CD4-positive, alpha-beta T cell (primary cell): ENCODE measurements at regions of chr3 and their contacts with region 1.

Region 1: GRCh38 chr3:44510000-44510368 is 32.5 kb upstream of the ZNF445 start:
- DNase-seq: peak in 4 of 14 experiments; percentile 14 to 44 (median 40)
- ATAC-seq: peak; percentile 25
- H3K4me3 ChIP-seq: peak overlapping the region; percentile 91
- H3K4me3 Mint-ChIP-seq: peak overlapping the region; percentile 100
- H3K27ac ChIP-seq: peak overlapping the region; percentile 74 to 79
- H3K27ac Mint-ChIP-seq: peak overlapping the region; percentile 88
- H3K4me1 ChIP-seq: peaks cover 25% of the 10 kb centered on the region
- H3K4me1 Mint-ChIP-seq: peaks cover 51% of the 10 kb centered on the region
- H3K27me3 ChIP-seq: no peaks in the 10 kb centered on the region
- H3K27me3 Mint-ChIP-seq: no peaks in the 10 kb centered on the region
- CTCF ChIP-seq: no peak

Region 2: DNA sequence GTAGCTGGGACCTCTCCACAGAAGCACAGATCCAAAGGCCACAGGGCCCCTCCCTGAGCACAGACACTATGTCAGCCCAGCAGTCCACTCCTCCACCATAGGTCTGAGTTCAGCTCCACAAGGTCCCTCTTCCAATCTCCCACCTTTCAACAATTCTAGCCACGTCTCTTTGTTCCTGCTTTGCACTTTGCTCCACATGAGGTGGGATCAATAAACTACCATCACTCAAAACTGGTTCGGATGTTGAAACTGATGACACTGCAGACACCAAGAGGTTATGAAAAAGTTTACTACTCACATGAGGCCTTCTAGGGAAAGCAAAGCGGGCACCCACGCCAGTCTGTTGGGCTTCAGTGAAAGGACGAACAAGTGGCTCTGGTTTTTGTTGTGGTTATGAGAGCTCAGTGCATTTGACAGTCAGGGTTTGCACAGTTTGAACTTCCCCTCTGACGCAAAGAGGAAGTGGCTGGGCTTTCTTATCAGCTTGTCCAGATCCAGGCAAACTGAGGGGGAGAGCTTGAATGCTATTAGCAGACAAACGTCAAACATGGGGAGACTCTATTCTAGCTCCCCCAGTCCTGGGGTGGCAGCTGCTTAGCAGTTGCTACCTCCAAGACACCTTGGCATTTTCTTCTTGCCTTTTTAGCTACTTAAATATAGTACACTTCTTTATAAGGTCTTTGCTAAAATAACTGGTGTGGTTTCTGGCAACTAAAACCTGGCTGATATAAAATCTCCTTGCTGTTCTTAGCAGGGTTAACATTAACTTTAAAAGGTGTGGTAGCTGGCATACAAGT is 70.3 kb before region 1 on chr3:
- CTCF ChIA-PET with region 1: no interaction called
- POLR2A ChIA-PET with region 1: interaction called, 11 read pairs
- intact Hi-C with region 1: loop called in 1 of 2 experiments (anchors 10 kb)
- DNase-seq: peak; percentile 10 to 88 (median 44)
- ATAC-seq: peak; percentile 81
- H3K4me3 ChIP-seq: no peak overlapping the region
- H3K4me3 Mint-ChIP-seq: peak overlapping the region; percentile 75
- H3K27ac ChIP-seq: peak overlapping the region; percentile 54 to 80
- H3K27ac Mint-ChIP-seq: peak overlapping the region; percentile 84
- H3K4me1 ChIP-seq: peaks cover 30% of the 10 kb centered on the region
- H3K4me1 Mint-ChIP-seq: peaks cover 39% of the 10 kb centered on the region
- H3K27me3 ChIP-seq: no peaks in the 10 kb centered on the region
- H3K27me3 Mint-ChIP-seq: no peaks in the 10 kb centered on the region
- CTCF ChIP-seq: no peak

Region 3: GRCh38 chr3:44554626-44555592 is 44.9 kb after region 1 on chr3 and contains the start of gene ZKSCAN7:
- CTCF ChIA-PET with region 1: no interaction called
- POLR2A ChIA-PET with region 1: interaction called, 19 read pairs
- intact Hi-C with region 1: no loop called
- DNase-seq: peak in 13 of 14 experiments; percentile 7 to 59 (median 33)
- ATAC-seq: peak; percentile 54
- H3K4me3 ChIP-seq: peak within 1 kb of the TSS; percentile 65
- H3K4me3 Mint-ChIP-seq: peak within 1 kb of the TSS; percentile 91
- H3K27ac ChIP-seq: no peak within 1 kb of the TSS
- H3K27ac Mint-ChIP-seq: peak within 1 kb of the TSS; percentile 63
- H3K4me1 ChIP-seq: peaks cover 16% of the 10 kb centered on the region
- H3K4me1 Mint-ChIP-seq: peaks cover 27% of the 10 kb centered on the region
- H3K27me3 ChIP-seq: no peaks in the 10 kb centered on the region
- H3K27me3 Mint-ChIP-seq: peaks cover 8% of the 10 kb centered on the region
- CTCF ChIP-seq: no peak
- total RNA-seq, gene ZKSCAN7: 0.20 to 0.49 TPM

Region 4: GRCh38 chr3:44685128-44685800 is 175.3 kb after region 1 on chr3:
- CTCF ChIA-PET with region 1: no interaction called
- POLR2A ChIA-PET with region 1: no interaction called
- intact Hi-C with region 1: no loop called
- DNase-seq: peak in 12 of 14 experiments; percentile 13 to 74 (median 43)
- ATAC-seq: peak; percentile 48
- H3K4me3 ChIP-seq: peak overlapping the region; percentile 54
- H3K4me3 Mint-ChIP-seq: peak overlapping the region; percentile 83
- H3K27ac ChIP-seq: no peak overlapping the region
- H3K27ac Mint-ChIP-seq: no peak overlapping the region
- H3K4me1 ChIP-seq: peaks cover 13% of the 10 kb centered on the region
- H3K4me1 Mint-ChIP-seq: peaks cover 13% of the 10 kb centered on the region
- H3K27me3 ChIP-seq: peaks cover 0 to 13% of the 10 kb centered on the region in 2 experiments
- H3K27me3 Mint-ChIP-seq: peaks cover 36% of the 10 kb centered on the region
- CTCF ChIP-seq: no peak

Region 5: GRCh38 chr3:44761424-44762169 is 251.6 kb after region 1 on chr3 and contains the starts of genes KIAA1143 and KIF15:
- CTCF ChIA-PET with region 1: no interaction called
- POLR2A ChIA-PET with region 1: interaction called, 18 read pairs
- intact Hi-C with region 1: loop called (anchors 2 kb)
- DNase-seq: peak; percentile 92 to 99 (median 96)
- ATAC-seq: peak; percentile 98
- H3K4me3 ChIP-seq: peak within 1 kb of the TSS; percentile 73
- H3K4me3 Mint-ChIP-seq: peak within 1 kb of the TSS; percentile 99
- H3K27ac ChIP-seq: peak within 1 kb of the TSS; percentile 72 to 76
- H3K27ac Mint-ChIP-seq: peak within 1 kb of the TSS; percentile 94
- H3K4me1 ChIP-seq: peaks cover 16% of the 10 kb centered on the region
- H3K4me1 Mint-ChIP-seq: peaks cover 39% of the 10 kb centered on the region
- H3K27me3 ChIP-seq: no peaks in the 10 kb centered on the region
- H3K27me3 Mint-ChIP-seq: no peaks in the 10 kb centered on the region
- CTCF ChIP-seq: no peak
- total RNA-seq, gene KIAA1143: 24.4 to 31.7 TPM
- total RNA-seq, gene KIF15: 0.08 to 0.11 TPM

Region 6: DNA sequence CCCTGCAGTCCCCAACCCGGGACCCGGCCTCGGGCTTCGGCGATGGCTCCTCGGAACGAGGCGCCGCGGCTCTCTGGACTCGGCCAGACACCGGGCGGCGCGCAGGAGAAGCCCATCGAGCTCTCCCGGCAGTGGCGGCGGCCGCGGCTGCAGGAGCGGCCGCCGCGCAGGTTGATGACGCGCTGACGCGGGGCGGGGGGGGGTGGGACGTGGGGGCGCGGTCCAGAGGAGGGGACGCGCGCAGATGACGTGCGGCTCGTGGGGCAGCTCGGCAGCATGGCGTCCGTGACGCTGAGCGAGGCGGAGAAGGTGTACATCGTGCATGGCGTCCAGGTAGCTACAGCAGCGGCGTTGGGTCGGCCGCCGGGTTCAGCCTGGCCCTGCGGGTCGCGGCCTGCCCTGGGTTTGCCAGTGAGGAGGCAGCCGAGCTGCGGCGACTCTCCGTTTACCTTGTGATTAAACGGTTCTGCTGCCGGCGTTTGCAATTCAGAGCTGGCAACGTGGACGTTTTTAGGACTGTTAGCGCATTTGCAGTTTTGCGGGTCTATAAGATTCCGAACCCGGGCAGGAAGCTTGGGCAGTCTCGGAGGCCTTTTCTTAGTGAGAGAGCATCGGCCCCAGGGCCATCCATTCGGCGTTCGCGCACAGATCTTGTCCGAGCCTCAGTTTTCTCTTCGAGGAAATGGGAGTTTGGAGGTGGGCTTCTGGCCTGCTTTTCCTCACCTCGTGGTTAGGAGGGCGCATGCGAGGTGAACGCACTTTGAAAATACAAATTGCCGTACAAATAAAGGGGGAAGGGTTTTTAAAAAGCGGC is 466.2 kb after region 1 on chr3 and contains the starts of genes EXOSC7 and ZDHHC3:
- CTCF ChIA-PET with region 1: no interaction called
- POLR2A ChIA-PET with region 1: interaction called, 15 read pairs
- intact Hi-C with region 1: loop called in 1 of 2 experiments (anchors 5 kb)
- DNase-seq: peak; percentile 77 to 97 (median 84)
- ATAC-seq: peak; percentile 95
- H3K4me3 ChIP-seq: peak within 1 kb of the TSS; percentile 95
- H3K4me3 Mint-ChIP-seq: peak within 1 kb of the TSS; percentile 98
- H3K27ac ChIP-seq: peak within 1 kb of the TSS; percentile 70 to 89
- H3K27ac Mint-ChIP-seq: peak within 1 kb of the TSS; percentile 94
- H3K4me1 ChIP-seq: peaks cover 48% of the 10 kb centered on the region
- H3K4me1 Mint-ChIP-seq: peaks cover 73% of the 10 kb centered on the region
- H3K27me3 ChIP-seq: no peaks in the 10 kb centered on the region
- H3K27me3 Mint-ChIP-seq: no peaks in the 10 kb centered on the region
- CTCF ChIP-seq: no peak
- total RNA-seq, gene EXOSC7: 28.1 to 28.4 TPM
- total RNA-seq, gene ZDHHC3: 34.4 to 34.6 TPM